ENCODE measurements at regions of chr3 and their contacts with region 1.

Region 1: DNA sequence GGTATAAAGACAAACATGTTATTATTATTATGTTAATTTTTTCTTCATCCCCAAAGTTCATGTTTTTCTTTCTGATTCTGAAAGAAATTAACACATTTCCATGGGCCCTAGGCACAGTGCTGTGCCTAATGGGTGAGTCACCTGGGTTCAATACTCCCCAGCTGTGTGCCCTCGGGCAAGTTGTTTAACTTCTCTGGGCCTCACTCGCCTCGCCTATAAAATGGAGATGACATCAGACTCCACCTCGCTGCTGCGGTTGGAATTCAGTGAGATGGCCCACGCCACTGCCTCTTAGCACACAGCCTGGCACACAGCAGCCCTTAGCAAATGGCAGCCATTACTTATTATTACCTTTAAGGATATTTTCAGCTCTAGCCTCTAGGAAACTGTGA is 22.6 kb downstream of the DNASE1L3 start:
- DNase-seq: peak; percentile 52

Region 2: DNA sequence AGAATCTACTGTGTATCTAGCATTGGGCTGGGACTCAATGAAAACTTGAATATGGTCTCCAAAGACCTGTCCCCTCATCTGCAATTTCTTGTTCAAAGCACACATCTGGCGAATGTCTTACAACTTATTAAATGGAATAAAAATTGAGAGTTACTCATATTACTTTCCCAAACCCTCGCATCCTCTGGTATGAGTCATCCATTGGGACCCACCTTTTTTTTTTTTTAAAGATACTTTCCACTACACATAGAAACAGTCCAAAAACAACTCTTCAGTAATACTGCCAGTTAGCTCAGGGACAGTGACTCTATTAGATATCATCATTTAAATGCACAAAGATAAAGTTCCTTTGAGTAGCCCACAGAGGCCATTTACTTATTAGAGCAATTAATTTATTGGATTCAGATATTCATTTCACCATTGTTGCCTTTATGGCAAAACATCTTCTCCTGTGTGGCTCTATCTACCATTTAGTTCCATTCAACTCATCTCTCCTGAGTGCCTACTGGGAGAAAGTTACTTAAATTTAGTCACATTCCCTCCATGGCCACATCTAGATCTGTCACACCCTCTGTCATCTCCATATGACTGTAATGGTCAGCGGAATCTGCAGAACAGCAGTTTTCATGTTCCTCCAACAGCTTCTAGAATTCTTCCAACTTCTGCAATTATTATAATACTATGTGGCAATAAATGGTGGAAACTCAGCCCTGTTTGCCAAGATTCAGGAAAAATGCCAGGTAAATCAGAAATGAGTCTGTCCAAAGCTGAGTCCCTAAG is 1308.5 kb before region 1 on chr3:
- intact Hi-C with region 1: loop called in 1 of 2 experiments (anchors 5 kb)
- DNase-seq: no peak

Region 3: GRCh38 chr3:58299839-58300516 is 111.8 kb after region 1 on chr3:
- intact Hi-C with region 1: loop called (anchors 5 kb)
- DNase-seq: no peak